Activated T-helper 1 cell treated with anti-CD3 and anti-CD28 coated beads, Interleukin-12 subunit alpha, Interleukin-12 subunit beta, Interleukin-2, Interleukin-4 antibody, amounts not matched to agents 30 ng/mL and 10 ng/mL and 1 ng/mL, durations not matched to agents 14 hours and 24 hours and 36 hours (primary cell): ENCODE measurements at regions of chrX and their contacts with region 1.

Region 1: DNA sequence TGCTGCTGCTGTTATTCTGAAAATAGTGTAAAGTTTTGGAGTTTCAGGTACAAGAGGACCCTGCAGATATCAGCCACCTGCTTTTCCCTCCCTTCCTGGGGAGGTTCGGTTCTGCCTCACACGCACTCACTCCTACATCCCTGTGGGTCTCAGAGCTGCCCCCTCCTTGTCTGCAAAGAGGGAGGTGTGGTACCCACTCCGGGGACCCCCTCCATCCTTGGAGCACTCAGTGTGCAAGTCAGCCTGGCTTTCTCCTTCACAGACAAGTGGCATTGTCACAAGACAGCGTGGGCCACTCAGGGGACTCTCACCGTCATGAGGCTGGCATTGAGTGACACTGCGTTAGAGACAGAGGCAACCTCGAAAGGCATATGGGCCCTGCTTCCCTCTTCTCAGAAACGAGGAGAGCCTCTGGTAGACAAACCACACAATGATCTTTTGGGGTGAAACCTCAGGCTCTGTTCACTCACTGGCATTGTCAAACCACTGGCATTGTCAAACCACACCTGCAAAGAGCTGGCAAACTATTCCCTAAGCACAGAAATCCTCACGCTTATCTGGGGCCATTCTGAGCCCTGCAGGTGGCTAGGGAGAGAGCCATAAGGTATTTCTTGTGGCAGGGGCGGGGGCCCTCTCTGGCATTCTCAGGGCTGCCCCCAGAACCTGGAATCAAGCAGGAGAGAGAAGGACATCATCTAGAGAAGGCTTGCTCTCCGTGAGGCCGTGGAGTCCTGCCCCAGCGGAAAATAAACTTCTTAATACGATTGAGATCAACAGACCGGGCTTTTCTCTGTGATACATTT is 285.0 kb downstream of the SHOX start:
- DNase-seq: peak; percentile 9
- H3K4me3 Mint-ChIP-seq: no peak overlapping the region
- H3K27ac Mint-ChIP-seq: no peak overlapping the region
- H3K4me1 Mint-ChIP-seq: no peaks in the 10 kb centered on the region
- H3K27me3 Mint-ChIP-seq: no peaks in the 10 kb centered on the region

Region 2: GRCh38 chrX:578531-578930 is 337.1 kb before region 1 on chrX:
- intact Hi-C with region 1: loop called (anchors 5 kb)
- DNase-seq: no peak
- H3K4me3 Mint-ChIP-seq: no peak overlapping the region
- H3K27ac Mint-ChIP-seq: no peak overlapping the region
- H3K4me1 Mint-ChIP-seq: no peaks in the 10 kb centered on the region
- H3K27me3 Mint-ChIP-seq: no peaks in the 10 kb centered on the region

Region 3: GRCh38 chrX:802846-803245 is 112.8 kb before region 1 on chrX:
- intact Hi-C with region 1: no loop called
- DNase-seq: no peak
- H3K4me3 Mint-ChIP-seq: no peak overlapping the region
- H3K27ac Mint-ChIP-seq: no peak overlapping the region
- H3K4me1 Mint-ChIP-seq: no peaks in the 10 kb centered on the region
- H3K27me3 Mint-ChIP-seq: peaks cover 1% of the 10 kb centered on the region

Region 4: GRCh38 chrX:1011642-1012283 is 96.1 kb after region 1 on chrX:
- intact Hi-C with region 1: loop called (anchors 5 kb)
- DNase-seq: no peak
- H3K4me3 Mint-ChIP-seq: no peak overlapping the region
- H3K27ac Mint-ChIP-seq: peak overlapping the region; percentile 19
- H3K4me1 Mint-ChIP-seq: no peaks in the 10 kb centered on the region
- H3K27me3 Mint-ChIP-seq: peaks cover 1% of the 10 kb centered on the region

Region 5: DNA sequence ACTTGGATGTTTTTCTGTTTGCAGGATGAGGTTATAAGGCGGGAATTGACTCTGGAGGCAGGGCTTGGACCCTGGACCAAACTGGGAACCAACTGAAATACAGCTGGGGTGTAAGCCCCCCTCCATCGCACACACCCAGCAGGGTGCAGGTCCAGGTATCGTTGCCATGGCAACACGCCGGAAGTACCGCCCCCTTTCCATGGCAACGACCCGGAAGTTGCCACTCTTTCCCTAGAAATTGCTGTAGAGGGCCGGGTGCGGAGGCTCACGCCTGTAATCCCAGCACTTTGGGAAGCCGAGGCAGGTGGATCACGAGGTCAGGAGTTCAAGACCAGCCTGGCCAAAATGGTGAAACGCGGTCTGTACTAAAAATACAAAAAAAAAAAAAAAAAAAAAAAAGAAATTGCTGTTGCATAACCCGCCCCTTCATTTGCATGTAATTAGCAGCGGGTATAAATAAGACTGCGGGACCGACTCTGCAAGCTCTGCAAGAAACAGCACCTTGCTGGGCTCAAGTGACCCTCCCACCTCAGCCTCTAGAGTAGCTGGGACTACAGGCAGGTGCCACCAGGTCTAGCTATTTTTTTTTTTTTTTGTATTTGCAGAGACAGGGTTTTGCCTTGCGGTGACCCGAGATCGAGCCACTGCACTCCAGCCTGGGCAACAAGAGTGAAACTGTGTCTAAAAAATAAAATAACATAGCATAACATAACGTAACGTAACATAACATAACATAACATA is 157.2 kb after region 1 on chrX:
- intact Hi-C with region 1: loop called (anchors 10 kb)
- DNase-seq: no peak
- H3K4me3 Mint-ChIP-seq: no peak overlapping the region
- H3K27ac Mint-ChIP-seq: no peak overlapping the region
- H3K4me1 Mint-ChIP-seq: peaks cover 6% of the 10 kb centered on the region
- H3K27me3 Mint-ChIP-seq: no peaks in the 10 kb centered on the region